ENCODE measurements at regions of chr11 and their contacts with region 1.

Region 1: DNA sequence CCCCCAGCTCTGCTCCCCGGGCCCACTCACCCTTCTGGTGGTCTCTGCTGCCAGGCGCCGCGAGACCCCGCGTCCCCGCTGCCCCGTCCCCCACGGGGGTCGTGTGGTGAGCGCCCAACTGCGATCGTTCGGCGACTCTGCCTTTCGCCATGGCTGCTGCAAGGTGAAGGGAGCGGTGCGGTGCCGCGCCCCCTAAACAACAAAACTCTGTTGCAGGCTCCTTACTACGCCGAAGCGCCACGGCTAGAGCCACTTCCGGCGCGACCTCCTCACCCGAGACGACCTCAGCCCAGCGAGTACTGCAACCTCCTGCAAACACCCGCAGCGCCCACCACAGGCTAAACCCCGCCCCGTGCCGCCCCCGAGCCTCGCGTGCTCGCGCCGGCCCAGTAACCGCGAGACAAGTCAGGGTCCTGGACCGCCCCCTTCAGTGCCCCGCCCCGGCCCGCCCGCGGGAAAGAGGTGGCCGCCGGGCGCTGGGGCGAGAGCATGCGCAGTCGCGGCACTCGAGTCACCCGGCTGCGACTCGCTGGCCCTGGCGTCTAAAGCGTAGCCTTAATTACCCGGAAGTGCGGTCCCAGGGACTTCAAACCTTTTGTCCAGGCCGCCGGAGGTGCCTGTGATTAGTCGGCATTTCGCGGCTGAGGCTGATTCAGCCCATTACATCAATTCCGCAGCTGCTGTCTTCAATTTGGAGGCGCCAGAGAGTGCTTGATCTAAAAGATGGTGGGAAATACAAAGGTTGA is at the start of gene TMEM41B:
- DNase-seq: peak; percentile 100
- CTCF ChIP-seq: no peak

Region 2: GRCh38 chr11:9003573-9004309 is 310.7 kb before region 1 on chr11 and contains the start of gene NRIP3:
- CTCF ChIA-PET with region 1: no interaction called
- POLR2A ChIA-PET with region 1: interaction called, 10 read pairs
- DNase-seq: peak; percentile 77
- CTCF ChIP-seq: no peak

Region 3: GRCh38 chr11:9060700-9061111 is 253.8 kb before region 1 on chr11:
- CTCF ChIA-PET with region 1: no interaction called
- POLR2A ChIA-PET with region 1: no interaction called
- DNase-seq: peak; percentile 80
- CTCF ChIP-seq: peak; percentile 52